Naive thymus-derived CD8-positive, alpha-beta T cell (primary cell): ENCODE measurements at regions of chr14 and their contacts with region 1.

Region 1: GRCh38 chr14:24241829-24242443 is 487 bp downstream of the TINF2 start:
- DNase-seq: peak in 9 of 10 donors; percentile 89 to 97 (median 92)
- ATAC-seq: peak; percentile 83 to 84
- H3K4me3 Mint-ChIP-seq: peak overlapping the region; percentile 83 to 99 (median 97)
- H3K27ac Mint-ChIP-seq: peak overlapping the region; percentile 96 to 100 (median 100)
- H3K4me1 Mint-ChIP-seq: peaks cover 32 to 76% (median 65%) of the 10 kb centered on the region in 4 donors
- H3K27me3 Mint-ChIP-seq: no peaks in the 10 kb centered on the region

Region 2: GRCh38 chr14:24146978-24147760 is 94.8 kb before region 1 on chr14 and contains the start of gene RNF31:
- POLR2A ChIA-PET with region 1: interaction called, 10 read pairs
- DNase-seq: peak; percentile 91 to 98 (median 96)
- ATAC-seq: peak; percentile 87 to 90
- H3K4me3 Mint-ChIP-seq: peak within 1 kb of the TSS; percentile 94 to 100 (median 98)
- H3K27ac Mint-ChIP-seq: peak within 1 kb of the TSS; percentile 91 to 99 (median 96)
- H3K4me1 Mint-ChIP-seq: peaks cover 22 to 71% (median 69%) of the 10 kb centered on the region in 4 donors
- H3K27me3 Mint-ChIP-seq: no peaks in the 10 kb centered on the region
- polyA plus RNA-seq, gene RNF31: 34.1 to 45.3 (median 37.6) TPM

Region 3: DNA sequence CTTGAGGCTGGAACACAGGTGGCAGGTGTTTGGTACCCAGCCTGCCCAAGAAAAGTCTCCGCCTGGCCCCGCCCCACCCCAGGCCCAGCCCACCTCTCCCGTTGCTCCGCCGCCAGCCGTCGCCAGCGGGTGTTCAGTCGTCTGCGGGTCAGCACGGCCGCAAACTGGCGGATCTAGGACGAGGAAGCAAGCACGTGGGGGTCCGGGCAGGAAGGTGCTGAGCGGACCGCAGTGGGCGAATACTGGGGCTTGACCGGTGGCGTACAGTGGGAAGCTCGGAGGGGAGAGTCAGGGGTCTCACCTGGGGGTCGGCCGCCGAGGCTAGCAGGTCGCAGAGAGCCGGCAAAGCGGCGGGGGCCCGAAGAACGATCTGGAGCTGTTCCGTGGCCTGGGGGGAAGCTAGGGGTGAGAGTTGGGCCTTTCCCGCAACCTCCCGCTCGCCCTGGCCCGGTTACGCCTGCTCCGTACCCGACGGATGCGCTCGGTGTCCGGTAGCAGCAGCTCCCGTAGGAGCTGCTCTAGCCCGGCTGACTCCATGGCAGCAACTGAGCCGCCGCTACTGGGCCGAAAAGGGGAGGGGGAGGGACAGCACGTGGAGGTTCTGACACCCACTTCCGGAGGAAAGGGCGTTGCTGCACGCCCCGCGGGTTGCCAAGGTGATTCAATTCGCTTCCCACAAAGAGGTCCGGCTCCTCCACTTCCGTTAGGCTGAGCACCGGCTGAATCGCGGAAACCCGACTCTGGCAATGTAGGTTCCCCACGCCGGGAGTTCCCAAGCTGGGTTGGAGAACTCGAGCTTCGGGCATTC is 53.5 kb before region 1 on chr14 and contains the start of gene IPO4:
- POLR2A ChIA-PET with region 1: interaction called, 18 read pairs
- DNase-seq: peak; percentile 85 to 98 (median 94)
- ATAC-seq: peak; percentile 90 to 97
- H3K4me3 Mint-ChIP-seq: peak within 1 kb of the TSS; percentile 80 to 95 (median 90)
- H3K27ac Mint-ChIP-seq: peak within 1 kb of the TSS; percentile 83 to 97 (median 94)
- H3K4me1 Mint-ChIP-seq: peaks cover 14 to 61% (median 44%) of the 10 kb centered on the region in 4 donors
- H3K27me3 Mint-ChIP-seq: peaks cover 0 to 2% (median 0%) of the 10 kb centered on the region in 5 donors
- polyA plus RNA-seq, gene IPO4: 20.2 to 27.5 (median 21.1) TPM

Region 4: DNA sequence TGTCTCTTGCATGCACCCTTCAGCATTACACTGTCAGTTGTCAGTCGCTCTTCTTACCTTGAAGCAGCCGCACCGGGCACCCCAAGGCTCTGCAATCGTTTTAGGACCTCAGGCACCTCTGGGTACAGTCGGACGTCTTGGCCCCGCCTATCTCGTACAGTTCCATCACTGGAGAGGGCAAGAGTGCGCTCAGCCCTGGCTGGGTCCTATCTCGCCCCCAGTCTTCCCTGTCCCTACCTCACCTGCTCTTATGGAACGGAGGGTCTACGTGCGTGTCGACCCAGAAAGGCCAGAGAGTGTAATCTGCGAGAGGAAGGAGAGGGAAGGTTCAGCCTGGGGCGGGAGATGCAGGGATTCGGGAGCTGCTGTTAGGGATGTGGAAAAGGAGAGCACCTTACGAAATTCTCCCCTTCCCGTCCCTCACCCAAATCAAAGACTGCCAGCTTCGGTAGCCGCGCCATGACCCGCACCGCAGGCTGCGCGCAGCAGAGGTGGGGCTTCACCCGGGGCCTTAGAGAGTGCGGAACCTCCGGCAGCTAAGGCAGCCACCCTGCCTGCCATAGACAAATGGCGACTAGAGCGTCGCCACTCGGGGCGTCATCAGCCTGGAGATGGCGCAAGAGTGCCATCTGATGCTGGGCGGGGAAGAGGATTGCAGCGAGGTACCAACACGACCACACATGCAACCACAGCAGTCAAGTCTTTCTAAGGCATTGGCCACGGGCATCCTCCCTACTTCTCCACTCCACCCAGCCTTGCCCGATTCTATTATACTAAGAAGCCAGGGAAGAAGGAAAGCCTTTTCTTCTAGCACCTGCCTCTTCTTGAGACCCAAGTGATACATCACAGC is 26.2 kb before region 1 on chr14 and contains the start of gene MDP1:
- POLR2A ChIA-PET with region 1: interaction called, 73 read pairs
- DNase-seq: peak; percentile 71 to 93 (median 86)
- ATAC-seq: peak; percentile 75
- H3K4me3 Mint-ChIP-seq: peak within 1 kb of the TSS; percentile 89 to 94 (median 92)
- H3K27ac Mint-ChIP-seq: peak within 1 kb of the TSS; percentile 93 to 100 (median 99)
- H3K4me1 Mint-ChIP-seq: peaks cover 27 to 55% (median 54%) of the 10 kb centered on the region in 4 donors
- H3K27me3 Mint-ChIP-seq: peaks cover 0 to 2% (median 0%) of the 10 kb centered on the region in 5 donors
- polyA plus RNA-seq, gene MDP1: 33.8 to 39.1 (median 34.5) TPM

Region 5: DNA sequence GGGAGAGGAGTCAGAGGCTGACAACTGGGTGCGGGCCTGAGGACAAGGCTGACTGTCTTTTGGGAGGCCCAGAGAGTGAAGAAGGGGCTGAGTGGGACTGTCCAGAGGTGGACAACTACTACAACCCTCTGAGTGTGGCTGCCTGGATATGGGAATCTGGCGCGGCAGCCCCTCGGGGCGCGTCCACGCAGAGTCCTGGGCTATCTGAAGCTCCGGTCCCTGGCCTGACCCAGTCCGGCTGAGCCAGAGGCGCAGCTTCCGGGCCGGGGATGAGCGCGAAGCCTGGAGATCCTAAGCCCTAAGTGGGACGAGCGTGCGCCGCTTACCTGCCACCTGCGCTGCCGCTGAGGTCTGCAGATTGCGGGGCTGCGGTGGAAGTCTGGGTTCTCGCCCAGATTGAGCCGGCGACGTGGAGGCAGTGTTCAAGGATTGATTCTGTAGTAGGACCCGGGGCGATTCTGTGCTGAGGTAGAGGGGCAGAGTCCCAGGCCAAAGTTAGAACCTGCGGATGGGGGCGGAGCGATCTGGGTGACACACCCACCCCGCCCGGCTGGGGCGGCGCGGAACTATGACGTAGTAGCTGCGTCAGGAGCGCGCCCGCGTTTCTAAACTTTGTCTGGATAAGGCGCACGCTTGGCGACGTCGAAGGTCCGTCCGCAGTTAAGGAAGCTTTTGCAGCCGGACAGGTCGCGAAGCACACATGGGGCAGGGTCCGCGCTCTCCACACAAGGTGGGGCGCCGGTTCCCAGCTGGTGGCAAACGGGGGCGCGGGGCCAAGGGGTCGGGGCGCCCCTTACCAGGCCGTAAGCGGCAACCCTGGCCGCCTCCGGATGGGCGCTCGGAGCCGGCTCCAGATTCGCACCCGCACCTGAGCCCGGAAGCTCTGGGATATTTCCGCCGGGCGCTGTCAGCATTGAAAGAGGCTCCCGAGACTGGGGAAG is 57.6 kb after region 1 on chr14 and contains the starts of genes DHRS1 and NOP9:
- POLR2A ChIA-PET with region 1: interaction called, 63 read pairs
- DNase-seq: peak; percentile 85 to 96 (median 92)
- ATAC-seq: peak; percentile 79 to 89
- H3K4me3 Mint-ChIP-seq: peak within 1 kb of the TSS; percentile 90 to 99 (median 94)
- H3K27ac Mint-ChIP-seq: peak within 1 kb of the TSS; percentile 94 to 98 (median 97)
- H3K4me1 Mint-ChIP-seq: peaks cover 29 to 55% (median 51%) of the 10 kb centered on the region in 4 donors
- H3K27me3 Mint-ChIP-seq: no peaks in the 10 kb centered on the region
- polyA plus RNA-seq, gene DHRS1: 19.6 to 22.4 (median 20.8) TPM
- polyA plus RNA-seq, gene NOP9: 1.3 to 2.2 (median 1.6) TPM

Region 6: GRCh38 chr14:24332268-24332993 is 90.5 kb after region 1 on chr14:
- POLR2A ChIA-PET with region 1: interaction called, 33 read pairs
- DNase-seq: peak; percentile 57 to 93 (median 88)
- ATAC-seq: peak; percentile 86 to 92
- H3K4me3 Mint-ChIP-seq: peak overlapping the region; percentile 72 to 93 (median 84)
- H3K27ac Mint-ChIP-seq: peak overlapping the region; percentile 4 to 94 (median 67)
- H3K4me1 Mint-ChIP-seq: peaks cover 19 to 75% (median 55%) of the 10 kb centered on the region in 4 donors
- H3K27me3 Mint-ChIP-seq: peaks cover 15 to 59% (median 22%) of the 10 kb centered on the region in 5 donors

Region 7: DNA sequence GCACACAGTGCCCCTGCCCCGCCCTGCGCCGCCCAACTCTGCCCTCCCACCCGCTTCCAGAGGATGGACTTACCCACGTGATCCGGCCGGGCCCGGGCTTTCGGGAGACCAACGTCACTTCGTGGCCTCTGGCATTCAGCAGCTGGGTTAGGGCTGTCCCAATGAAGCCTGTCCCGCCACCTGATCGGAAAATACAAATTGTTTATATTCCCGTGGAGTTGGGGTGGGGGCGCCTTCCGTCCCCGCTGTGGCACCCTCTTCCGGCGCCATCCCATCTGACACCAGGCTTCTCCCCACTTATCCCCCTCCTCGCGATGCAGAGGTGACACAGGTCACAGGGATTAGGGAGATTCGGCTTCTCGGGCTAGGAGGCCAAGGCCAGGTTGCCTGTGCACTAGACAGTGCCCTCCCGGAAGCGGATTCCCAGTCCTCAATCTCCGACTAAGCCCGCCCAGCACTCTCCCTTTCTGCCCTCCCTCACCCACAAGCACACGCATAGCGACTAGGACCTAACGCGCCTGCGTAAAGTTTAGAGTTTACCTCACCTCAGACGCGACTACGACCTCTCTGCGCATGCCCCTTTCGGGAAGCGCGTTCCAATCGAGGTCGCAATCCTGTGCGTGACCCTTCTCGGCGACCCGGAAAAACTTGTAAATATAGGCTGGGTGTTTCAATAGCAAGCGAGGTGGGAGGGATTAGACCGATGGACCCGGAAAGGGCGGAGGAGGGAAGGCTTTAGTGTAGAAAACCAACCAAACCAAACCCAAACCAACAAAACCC is 200.5 kb after region 1 on chr14 and contains the start of gene SDR39U1:
- POLR2A ChIA-PET with region 1: interaction called, 18 read pairs
- DNase-seq: peak; percentile 84 to 99 (median 96)
- ATAC-seq: peak; percentile 88 to 89
- H3K4me3 Mint-ChIP-seq: peak within 1 kb of the TSS; percentile 90 to 98 (median 96)
- H3K27ac Mint-ChIP-seq: peak within 1 kb of the TSS; percentile 98 to 100 (median 99)
- H3K4me1 Mint-ChIP-seq: peaks cover 21 to 50% (median 45%) of the 10 kb centered on the region in 4 donors
- H3K27me3 Mint-ChIP-seq: no peaks in the 10 kb centered on the region
- polyA plus RNA-seq, gene SDR39U1: 70.3 to 90.8 (median 89.5) TPM